WTC11 (cell line): ENCODE measurements at regions of chr5 and their contacts with region 1.

Region 1: DNA sequence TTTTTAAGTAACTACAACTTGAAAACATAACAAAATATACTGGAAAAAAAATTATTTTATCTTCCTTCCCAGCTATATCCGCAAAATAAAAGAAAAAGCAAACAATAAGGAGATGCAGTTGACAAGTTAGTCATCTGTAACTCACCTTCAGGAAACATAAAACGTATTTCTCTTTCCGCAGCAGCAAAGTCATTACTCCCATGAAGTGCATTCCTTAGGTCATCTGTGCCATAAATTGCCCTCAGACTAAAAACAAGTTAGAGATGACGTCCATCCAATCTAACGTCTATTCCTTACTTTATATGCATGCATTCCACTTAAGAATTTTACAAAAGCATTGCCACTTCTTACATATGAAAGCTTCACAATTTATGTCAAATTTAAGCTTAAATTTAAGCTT is 10.9 kb downstream of the NME5 start:
- DNase-seq: no peak
- ATAC-seq: no peak
- H3K4me3 Mint-ChIP-seq: no peak overlapping the region
- H3K27ac Mint-ChIP-seq: no peak overlapping the region
- H3K4me1 Mint-ChIP-seq: 0 out of 2 replicates have a peak, but pooled peaks cover 2% of the 10 kb centered on the region
- H3K27me3 Mint-ChIP-seq: no peaks in the 10 kb centered on the region
- CTCF ChIP-seq: no peak

Region 2: DNA sequence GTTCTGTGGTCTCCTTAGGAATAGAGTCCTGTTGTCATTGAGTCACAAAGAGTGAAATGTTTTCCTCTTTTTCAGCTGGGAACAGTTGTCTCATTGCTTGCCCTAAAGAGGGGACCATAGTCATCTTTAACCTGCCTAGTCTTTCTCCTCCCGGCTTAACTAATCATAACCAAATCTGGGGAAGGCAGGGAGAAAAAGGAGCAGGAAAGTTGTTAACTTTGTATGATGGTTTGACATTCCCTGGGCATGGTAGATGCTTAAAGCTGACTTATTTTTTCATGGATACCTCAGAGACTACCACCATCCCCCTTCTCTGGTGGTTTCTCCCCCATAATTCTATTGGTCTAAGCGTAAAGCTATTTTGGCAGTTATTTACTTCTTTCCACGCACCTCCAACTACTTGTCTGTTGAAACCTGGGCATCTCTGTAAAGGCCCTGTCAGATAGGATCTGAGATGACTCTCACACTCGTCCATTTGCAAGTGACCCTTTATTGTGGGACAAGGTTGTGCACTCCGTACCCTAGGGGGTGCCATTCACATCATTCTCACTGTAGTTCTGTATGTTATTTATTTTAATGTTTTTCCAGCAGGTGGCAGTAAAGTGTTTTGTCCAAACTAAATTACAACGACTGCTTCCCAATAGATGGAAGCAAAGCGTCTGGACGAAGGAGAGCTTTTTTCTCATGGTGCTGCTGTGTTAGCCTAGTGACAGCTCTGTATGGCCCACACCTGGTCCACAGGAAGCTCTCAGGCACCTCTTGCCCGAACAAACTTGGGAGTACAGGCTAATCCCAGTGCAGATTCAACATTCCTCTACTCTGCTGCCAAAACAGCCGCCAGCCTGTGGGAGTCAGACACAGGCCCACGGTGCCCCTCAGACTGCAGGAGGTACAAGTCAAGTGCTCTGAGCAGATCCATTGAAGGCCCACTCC is 92.5 kb before region 1 on chr5:
- CTCF ChIA-PET with region 1: interaction called, 35 read pairs
- POLR2A ChIA-PET with region 1: no interaction called
- DNase-seq: peak; percentile 62
- ATAC-seq: peak; percentile 57
- H3K4me3 Mint-ChIP-seq: no peak overlapping the region
- H3K27ac Mint-ChIP-seq: no peak overlapping the region
- H3K4me1 Mint-ChIP-seq: peaks cover 25% of the 10 kb centered on the region
- H3K27me3 Mint-ChIP-seq: no peaks in the 10 kb centered on the region
- CTCF ChIP-seq: peak; percentile 59

Region 3: GRCh38 chr5:138065102-138065501 is 63.2 kb before region 1 on chr5:
- CTCF ChIA-PET with region 1: interaction called, 13 read pairs
- POLR2A ChIA-PET with region 1: no interaction called
- DNase-seq: peak; percentile 66
- ATAC-seq: peak; percentile 91
- H3K4me3 Mint-ChIP-seq: no peak overlapping the region
- H3K27ac Mint-ChIP-seq: no peak overlapping the region
- H3K4me1 Mint-ChIP-seq: peaks cover 2% of the 10 kb centered on the region; the same call in 1 of the 2 replicates
- H3K27me3 Mint-ChIP-seq: peaks cover 4% of the 10 kb centered on the region; the same call in 1 of the 2 replicates
- CTCF ChIP-seq: peak; percentile 31; the same call in 1 of the 2 replicates

Region 4: DNA sequence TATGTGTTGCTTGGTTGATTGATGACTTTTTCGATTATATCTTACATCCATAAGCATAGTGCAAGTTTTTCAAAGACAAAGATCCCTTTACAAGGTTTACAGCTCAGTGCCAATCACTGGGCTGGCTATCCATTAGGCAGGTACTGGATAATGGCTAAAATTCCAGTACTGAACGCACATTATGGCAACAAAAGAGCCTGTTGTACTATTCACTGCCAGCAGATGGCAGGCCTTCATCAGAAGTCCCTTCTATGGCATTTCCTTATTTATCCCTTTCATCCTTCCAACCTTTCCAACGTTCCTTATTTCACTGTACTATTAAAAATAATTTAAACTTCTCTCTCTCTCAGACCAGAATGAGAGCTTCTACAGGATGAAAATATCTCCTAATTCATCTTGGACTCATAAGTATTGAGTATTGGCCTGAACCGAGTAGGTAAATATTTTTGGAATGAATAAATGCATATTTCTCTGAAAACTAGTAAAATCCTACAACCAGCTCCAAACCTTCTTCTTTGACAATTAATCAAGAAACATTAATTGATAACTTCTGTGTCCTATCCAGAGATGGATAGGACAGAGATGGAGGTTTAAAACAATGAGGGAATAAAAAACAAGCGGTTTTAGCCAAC is 51.2 kb before region 1 on chr5:
- CTCF ChIA-PET with region 1: interaction called, 85 read pairs
- POLR2A ChIA-PET with region 1: no interaction called
- DNase-seq: peak; percentile 74
- ATAC-seq: peak; percentile 68
- H3K4me3 Mint-ChIP-seq: no peak overlapping the region
- H3K27ac Mint-ChIP-seq: no peak overlapping the region
- H3K4me1 Mint-ChIP-seq: peaks cover 20% of the 10 kb centered on the region
- H3K27me3 Mint-ChIP-seq: peaks cover 14% of the 10 kb centered on the region
- CTCF ChIP-seq: peak; percentile 69

Region 5: GRCh38 chr5:138083702-138084101 is 44.6 kb before region 1 on chr5 and contains the start of gene WNT8A:
- CTCF ChIA-PET with region 1: interaction called, 85 read pairs
- POLR2A ChIA-PET with region 1: interaction called, 3 read pairs
- DNase-seq: peak; percentile 30
- ATAC-seq: peak; percentile 61
- H3K4me3 Mint-ChIP-seq: no peak within 1 kb of the TSS
- H3K27ac Mint-ChIP-seq: no peak within 1 kb of the TSS
- H3K4me1 Mint-ChIP-seq: peaks cover 15% of the 10 kb centered on the region
- H3K27me3 Mint-ChIP-seq: peaks cover 75% of the 10 kb centered on the region
- CTCF ChIP-seq: no peak
- total RNA-seq, gene WNT8A: 0.16 TPM in 1 of 3 replicates, not detected in the others

Region 6: DNA sequence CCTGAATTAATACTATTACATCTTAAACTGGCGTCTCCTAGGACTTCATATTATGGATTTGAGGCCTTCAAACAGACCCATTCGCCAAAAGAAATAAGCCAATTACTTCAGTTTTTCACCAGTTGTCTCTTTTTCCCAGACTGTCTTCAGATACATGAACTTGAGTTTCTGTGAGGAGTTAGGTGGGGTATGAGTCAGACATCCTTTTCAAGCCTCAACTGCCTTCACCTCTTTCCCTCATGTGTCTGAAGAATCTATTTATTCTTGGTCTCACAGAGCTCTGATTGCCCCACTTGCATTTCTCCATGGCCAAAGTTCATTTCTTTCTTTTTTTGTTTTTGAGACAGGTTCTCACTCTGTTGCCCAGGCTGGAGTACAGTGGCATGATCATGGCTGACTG is 32.0 kb before region 1 on chr5:
- CTCF ChIA-PET with region 1: interaction called, 20 read pairs
- POLR2A ChIA-PET with region 1: no interaction called
- DNase-seq: no peak
- ATAC-seq: no peak
- H3K4me3 Mint-ChIP-seq: peak overlapping the region; percentile 12; the same call in 1 of the 2 replicates
- H3K27ac Mint-ChIP-seq: no peak overlapping the region
- H3K4me1 Mint-ChIP-seq: peaks cover 68% of the 10 kb centered on the region
- H3K27me3 Mint-ChIP-seq: peaks cover 100% of the 10 kb centered on the region
- CTCF ChIP-seq: no peak

Region 7: DNA sequence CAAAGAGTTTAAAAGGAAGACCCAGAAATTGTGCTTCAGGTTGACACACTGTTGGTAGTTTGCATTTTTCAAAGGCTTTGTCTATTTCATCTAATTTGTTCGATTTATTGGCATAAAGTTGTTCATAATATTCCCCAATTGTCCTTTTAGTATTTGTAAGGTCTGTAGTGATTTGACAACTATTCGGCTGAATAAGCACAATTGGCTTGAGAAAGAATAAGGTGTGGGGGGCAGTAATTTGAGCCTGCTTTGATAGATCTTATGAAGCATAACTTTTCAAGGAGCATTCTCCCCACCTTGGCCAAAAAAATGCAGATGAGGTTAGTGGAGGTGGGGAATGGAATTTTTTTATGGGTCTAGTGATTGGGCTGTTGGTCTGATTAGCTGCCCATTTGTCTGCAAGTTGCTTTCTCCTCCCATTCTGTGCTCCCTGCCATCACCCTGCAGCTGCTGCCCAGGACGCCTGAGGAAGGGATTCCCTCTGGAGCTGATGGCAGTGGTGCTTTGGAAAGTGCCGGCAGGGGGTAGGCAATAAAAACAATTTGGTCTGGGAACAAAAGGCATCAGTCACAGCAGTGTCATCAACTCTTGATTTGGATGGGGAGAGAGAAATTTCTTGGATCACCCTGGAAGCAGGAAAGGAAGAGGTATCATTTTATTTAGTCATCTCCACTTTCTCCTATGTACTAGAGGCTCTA is 17.9 kb before region 1 on chr5:
- CTCF ChIA-PET with region 1: interaction called, 11 read pairs
- POLR2A ChIA-PET with region 1: no interaction called
- DNase-seq: peak; percentile 21
- ATAC-seq: peak; percentile 46; the same call in 1 of the 2 replicates
- H3K4me3 Mint-ChIP-seq: no peak overlapping the region
- H3K27ac Mint-ChIP-seq: no peak overlapping the region
- H3K4me1 Mint-ChIP-seq: peaks cover 14% of the 10 kb centered on the region
- H3K27me3 Mint-ChIP-seq: peaks cover 14% of the 10 kb centered on the region
- CTCF ChIP-seq: no peak

Region 8: GRCh38 chr5:138230981-138231589 is 102.8 kb after region 1 on chr5:
- CTCF ChIA-PET with region 1: no interaction called
- POLR2A ChIA-PET with region 1: no interaction called
- DNase-seq: no peak
- ATAC-seq: peak; percentile 36; the same call in 1 of the 2 replicates
- H3K4me3 Mint-ChIP-seq: no peak overlapping the region
- H3K27ac Mint-ChIP-seq: no peak overlapping the region
- H3K4me1 Mint-ChIP-seq: 0 out of 2 replicates have a peak, but pooled peaks cover 5% of the 10 kb centered on the region
- H3K27me3 Mint-ChIP-seq: peaks cover under 1% of the 10 kb centered on the region; the same call in 1 of the 2 replicates
- CTCF ChIP-seq: no peak